ENCODE measurements at regions of chr14 and their contacts with region 1.

Region 1: DNA sequence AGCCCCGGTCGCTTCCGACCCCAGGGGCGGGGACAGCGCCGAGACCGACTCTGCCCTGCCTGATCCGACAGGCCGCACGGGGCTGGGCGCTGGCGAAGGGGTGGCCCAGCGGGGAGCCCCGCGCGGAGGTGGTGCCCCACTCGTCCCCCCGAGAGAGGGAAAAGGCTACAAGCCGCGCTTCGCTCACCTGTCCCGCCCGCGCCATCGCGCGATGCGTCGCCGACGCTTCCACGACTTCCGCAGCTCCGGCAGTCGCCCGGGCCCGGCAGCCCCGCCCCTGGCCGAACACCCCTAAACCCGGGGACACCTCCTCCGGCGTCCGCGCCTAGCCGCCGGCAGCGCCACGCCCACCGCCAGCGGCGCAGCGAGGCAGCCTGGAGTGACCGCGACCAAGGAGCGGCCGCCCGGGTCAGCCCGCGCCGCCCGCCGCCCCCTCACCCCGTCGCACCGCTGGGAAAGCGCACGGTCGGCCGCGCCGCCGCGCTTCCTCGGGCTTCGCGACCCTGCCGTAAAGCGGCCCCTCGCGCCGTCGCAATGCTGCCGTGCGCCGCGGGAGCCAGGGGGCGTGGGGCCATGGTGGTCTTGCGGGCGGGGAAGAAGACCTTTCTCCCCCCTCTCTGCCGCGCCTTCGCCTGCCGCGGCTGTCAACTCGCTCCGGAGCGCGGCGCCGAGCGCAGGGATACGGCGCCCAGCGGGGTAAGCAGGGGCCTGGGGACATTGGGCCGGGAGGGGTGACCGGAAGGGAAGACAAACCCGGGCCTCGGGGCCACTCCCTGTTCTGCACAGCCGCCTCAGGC is at the starts of genes BAG5 and COA8:
- DNase-seq: peak; percentile 86
- H3K4me3 ChIP-seq: peak within 1 kb of the TSS; percentile 61 to 97 (median 95)
- H3K27ac ChIP-seq: peak within 1 kb of the TSS; percentile 94
- H3K4me1 ChIP-seq: peaks cover 23% of the 10 kb centered on the region
- H3K27me3 ChIP-seq: no peaks in the 10 kb centered on the region
- CTCF ChIP-seq: no peak
- POLR2A ChIP-seq: peak; percentile 36
- total RNA-seq, gene BAG5: 28.4 and 32.5 TPM in 2 replicates
- total RNA-seq, gene COA8: 46.4 and 52.6 TPM in 2 replicates

Region 2: DNA sequence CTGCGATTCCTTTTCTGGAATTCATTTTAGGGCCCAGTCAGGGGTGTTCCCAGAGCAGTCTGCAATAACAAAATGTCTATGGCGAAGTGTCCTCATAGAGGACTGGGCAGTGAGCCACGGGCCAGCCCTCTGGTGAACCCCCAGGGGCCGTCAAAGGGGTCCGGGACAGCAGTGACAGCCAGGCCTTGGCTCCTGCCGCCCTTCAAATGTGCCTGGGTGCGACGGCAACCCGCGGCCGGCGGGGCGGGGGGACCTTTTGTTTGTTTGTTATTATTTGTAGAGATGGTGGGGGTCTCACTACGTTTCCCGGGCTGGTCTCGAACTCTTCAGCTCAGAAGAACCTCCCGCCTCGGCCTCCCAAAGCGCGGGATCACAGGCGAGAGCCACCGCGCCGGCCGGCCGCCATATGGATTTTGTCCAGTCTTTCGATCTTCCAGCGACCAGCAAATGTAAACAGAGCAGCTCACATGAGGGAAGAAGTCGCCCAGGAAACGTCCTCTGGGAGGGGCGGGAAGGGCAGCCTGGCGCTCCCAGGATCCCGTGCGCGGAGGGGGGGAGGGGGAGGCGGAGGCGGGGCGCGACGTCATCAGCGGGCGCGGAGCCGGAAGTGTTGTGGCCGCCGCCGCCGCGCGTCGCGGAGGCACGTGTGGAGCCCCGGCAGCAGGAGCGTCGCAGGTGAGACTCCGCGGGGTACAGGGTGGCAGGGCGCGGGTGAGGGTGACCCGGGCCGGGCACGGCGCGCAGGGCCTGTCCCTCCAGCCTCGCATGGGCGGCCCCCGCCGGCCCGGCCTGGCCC is 33.8 kb before region 1 on chr14 and contains the start of gene TRMT61A:
- CTCF ChIA-PET with region 1: no interaction called
- POLR2A ChIA-PET with region 1: interaction called, 3 read pairs
- dilution Hi-C with region 1: no loop called
- intact Hi-C with region 1: loop called (anchors 5 kb)
- DNase-seq: peak; percentile 49
- H3K4me3 ChIP-seq: peak within 1 kb of the TSS; percentile 73 to 94 (median 78)
- H3K27ac ChIP-seq: peak within 1 kb of the TSS; percentile 43
- H3K4me1 ChIP-seq: peaks cover 8% of the 10 kb centered on the region
- H3K27me3 ChIP-seq: peaks cover 6% of the 10 kb centered on the region in 2 experiments
- CTCF ChIP-seq: no peak
- POLR2A ChIP-seq: no peak
- total RNA-seq, gene TRMT61A: 6.8 and 7.5 TPM in 2 replicates

Region 3: DNA sequence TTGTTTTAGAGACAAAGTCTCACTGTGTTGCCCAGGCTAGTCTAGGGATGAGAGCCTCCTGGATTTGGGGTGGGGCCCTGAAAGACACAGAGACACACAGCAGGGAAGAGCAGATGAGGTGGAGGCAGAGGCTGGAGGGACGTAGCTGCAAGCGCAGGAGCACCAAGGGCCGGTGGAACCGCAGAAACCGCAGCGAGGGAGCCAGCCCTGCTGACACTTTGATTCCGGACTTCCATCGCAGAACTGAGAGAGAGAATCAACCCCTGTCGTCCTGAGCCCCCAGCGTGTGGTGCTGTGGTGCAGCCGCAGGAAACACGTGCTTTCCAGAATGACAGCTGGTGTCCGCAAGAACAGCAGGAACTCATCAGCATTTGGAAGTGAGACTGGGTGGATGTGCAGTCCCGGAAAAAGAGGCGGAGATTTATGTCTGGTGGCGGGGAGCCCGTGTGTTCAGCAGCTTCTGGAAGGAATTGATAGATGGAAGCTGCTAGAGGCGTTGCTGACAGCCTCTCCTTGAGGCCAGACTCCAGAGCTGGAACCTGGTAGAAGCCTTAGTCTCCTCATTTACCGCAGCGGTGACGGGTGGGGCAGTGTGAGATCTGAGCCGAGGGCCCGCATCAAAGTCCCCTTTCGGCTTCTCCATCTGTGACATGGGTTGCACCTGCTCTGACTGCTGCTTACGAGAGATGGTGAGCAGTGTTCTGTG is 44.5 kb after region 1 on chr14:
- CTCF ChIA-PET with region 1: no interaction called
- POLR2A ChIA-PET with region 1: no interaction called
- dilution Hi-C with region 1: no loop called
- intact Hi-C with region 1: no loop called
- DNase-seq: peak; percentile 55
- H3K4me3 ChIP-seq: peak overlapping the region in 1 of 3 experiments; percentile 46
- H3K27ac ChIP-seq: no peak overlapping the region
- H3K4me1 ChIP-seq: peaks cover 13% of the 10 kb centered on the region
- H3K27me3 ChIP-seq: peaks cover 0 to 11% of the 10 kb centered on the region in 2 experiments
- CTCF ChIP-seq: no peak
- POLR2A ChIP-seq: no peak

Measured in endothelial cell of umbilical vein (primary cell).